Heart right ventricle (tissue), 16 donors: ENCODE measurements at regions of chr20 and their contacts with region 1.

Region 1: DNA sequence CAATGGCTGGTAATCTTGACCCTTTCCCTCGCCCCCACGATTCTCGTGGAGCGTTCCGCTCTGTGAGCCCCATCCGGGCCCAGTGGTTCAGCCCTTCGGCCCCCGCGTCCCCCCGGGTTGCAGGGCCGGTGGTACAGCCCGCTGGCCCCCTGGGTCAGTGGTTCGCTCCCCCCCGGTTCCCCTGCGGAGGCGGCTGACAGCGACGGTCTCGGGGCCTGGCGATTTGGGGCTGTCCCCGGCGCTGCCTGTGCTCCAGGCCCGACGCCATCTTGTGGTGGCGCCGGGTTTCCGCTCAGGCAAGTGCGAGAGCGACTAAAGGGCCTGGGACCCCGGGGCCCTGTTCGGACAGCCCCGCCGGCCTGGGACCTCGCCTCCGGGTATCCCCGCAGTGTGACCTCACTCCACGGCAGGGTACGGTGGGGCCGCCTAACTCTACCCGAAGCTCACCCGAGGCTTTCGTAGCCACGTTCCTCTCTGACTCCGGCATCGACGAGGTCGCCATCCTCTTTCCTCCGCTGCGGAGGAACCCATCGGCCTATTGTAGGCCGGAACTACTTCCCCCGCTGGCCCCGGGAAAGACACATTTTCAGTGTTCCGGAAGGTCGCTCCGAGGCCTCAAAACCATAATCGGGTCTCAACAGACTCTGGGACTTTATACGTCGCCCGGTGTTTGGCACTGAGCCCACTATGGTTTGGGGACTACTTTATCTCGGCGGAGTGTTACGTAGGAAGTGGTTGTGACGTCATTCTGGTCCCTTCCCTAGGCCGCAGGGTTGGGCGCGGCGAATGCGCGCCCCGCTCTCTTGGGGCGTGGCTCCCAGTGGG is at the start of gene ZNF335:
- DNase-seq: peak; percentile 96
- ATAC-seq: peak; percentile 93 to 98 (median 96)
- H3K4me3 ChIP-seq: peak within 1 kb of the TSS; percentile 63 to 99 (median 88)
- H3K27ac ChIP-seq: peak within 1 kb of the TSS; percentile 96 to 100 (median 99)
- H3K4me1 ChIP-seq: peaks cover 0 to 39% (median 22%) of the 10 kb centered on the region in 9 donors
- H3K27me3 ChIP-seq: no peaks in the 10 kb centered on the region
- CTCF ChIP-seq: peak in 8 of 9 donors; percentile 40 to 67 (median 50)
- total RNA-seq, gene ZNF335: 6.1 to 11.6 (median 7.3) TPM

Region 2: DNA sequence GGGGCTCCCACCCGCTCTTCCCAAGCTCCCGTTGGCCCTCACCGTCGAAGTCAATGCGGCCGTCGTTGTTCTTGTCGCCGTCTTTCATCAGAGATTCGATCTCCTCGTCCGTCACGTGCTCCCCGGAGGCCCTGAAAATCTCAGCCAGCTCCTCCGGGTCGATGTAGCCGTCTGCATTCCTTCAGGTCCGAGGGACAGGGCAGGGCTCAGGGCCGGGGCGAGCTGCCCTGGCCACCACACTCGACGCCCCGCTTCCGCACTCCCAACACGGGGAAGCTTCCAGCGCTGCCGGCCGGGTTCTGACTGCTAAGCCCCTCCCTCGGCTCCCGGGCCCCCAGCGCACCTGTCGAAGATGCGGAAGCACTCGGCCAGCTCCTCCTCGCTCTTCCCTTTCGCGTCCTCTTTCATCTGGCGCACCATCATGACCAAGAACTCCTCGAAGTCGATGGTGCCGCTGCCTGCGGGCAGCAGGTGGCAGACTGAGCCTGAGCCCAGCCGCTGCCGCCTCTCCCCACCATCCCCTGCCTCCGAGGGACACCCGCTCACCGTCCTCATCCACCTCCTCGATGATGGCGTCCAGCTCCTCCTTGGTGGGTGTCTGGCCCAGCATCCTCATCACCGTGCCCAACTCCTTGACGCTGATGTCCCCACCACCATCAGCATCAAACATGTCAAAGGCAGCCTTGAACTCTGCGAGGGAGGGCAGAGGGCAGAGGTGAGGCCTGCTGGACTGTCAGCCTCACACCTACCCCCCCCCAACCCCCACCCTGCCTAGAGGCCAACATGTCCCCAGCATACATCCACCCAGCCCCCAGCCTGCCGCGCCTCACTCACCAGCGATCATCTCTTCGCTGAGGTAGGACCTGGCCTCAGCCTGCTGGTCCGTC is 147.7 kb before region 1 on chr20:
- intact Hi-C with region 1: loop called in 4 of 10 experiments (anchors 10 kb)
- DNase-seq: peak in 1 of 2 donors; percentile 60
- ATAC-seq: peak; percentile 57 to 76 (median 67)
- H3K4me3 ChIP-seq: peak overlapping the region in 5 of 10 donors; percentile 3 to 30 (median 28)
- H3K27ac ChIP-seq: no peak overlapping the region
- H3K4me1 ChIP-seq: peaks cover 4 to 40% (median 26%) of the 10 kb centered on the region in 9 donors
- H3K27me3 ChIP-seq: peaks cover 3 to 53% (median 35%) of the 10 kb centered on the region in 7 donors
- CTCF ChIP-seq: peak; percentile 5 to 61 (median 49)

Region 3: DNA sequence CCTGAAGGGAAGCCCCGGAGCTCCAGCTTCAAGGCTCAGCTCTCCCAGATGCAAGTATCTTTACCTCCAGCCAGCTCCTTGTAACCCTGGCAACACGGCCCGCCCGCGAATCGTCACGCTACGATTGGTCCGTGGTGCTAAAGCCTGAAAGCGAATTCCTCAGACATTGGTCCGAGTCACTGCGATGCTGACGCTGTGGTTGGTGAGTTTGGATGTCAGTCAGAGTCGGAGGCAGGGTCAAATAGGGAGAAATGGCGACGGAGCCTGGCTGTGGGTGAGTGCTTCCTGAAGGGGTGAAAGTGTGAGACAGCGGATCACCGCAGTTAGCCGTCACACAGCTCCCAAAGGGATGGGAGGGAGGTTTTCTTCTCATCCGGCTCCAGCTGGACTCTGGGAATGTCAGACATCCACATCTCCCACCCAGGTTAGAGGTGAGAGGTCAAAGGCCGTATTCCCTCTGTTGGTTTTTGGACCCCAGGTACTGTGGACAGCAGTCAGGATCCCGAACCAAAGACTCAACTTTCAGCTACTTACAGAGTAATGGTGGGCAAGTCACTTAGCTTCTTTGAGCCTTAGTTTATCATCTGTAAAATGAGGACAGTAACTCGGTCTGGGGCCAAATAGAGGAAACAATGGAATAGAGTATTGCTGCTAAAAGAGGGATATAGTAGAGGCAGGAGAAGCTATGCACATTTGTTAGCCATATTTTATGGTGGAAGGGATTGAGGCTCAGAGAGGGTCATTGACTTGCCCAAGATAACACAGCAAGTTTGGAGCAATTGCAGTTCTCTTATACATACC is 90.7 kb before region 1 on chr20 and contains the start of gene ZSWIM1:
- intact Hi-C with region 1: loop called in 1 of 10 experiments (anchors 10 kb)
- DNase-seq: peak; percentile 99
- ATAC-seq: peak; percentile 95 to 99 (median 98)
- H3K4me3 ChIP-seq: peak within 1 kb of the TSS; percentile 57 to 79 (median 68)
- H3K27ac ChIP-seq: peak within 1 kb of the TSS; percentile 47 to 90 (median 83)
- H3K4me1 ChIP-seq: peaks cover 0 to 31% (median 21%) of the 10 kb centered on the region in 9 donors
- H3K27me3 ChIP-seq: no peaks in the 10 kb centered on the region
- CTCF ChIP-seq: no peak
- total RNA-seq, gene ZSWIM1: 9.2 to 12.0 (median 10.4) TPM

Region 4: DNA sequence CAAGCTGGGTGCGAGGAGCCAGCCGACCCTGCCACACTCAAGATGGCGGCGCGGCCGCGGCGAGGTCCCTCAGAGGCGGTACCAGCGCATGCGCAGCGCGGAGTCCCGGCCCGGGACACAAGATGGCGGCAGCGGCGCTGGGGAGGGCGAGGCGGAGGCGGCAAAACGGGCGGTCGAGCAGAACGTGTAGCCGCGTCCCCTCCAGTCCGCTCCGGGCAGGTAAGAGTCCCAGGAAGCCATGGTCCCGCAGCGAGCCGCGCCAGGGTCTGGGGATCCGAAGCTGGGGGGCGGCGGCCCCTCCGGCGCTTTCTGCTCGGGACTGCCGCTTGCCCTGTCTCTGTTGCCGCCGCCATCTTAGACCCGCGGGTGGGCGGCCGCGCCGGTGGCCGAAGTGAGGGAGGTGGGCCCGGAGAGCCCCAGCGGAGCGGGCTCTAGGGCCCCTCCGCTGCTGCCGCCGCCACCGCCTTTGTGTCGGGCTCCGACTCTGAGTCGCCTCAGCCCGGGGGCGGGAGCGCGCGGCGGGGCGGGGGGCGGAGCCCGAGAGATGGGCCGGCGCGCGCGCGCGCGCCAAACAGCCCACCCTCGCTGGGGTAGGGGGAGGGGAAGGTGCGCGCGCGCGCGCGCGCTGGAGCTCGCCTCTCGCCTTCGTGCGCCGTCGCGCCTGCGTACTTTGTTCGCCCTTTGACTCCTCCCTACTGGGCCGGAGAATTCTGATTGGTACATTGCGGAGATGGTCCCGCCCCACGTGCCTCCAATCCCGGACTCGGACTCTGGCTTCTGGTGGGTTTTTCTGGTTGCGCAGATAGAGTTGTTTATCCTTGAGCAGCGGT is 37.1 kb before region 1 on chr20 and contains the start of gene PCIF1:
- intact Hi-C with region 1: loop called in 3 of 10 experiments (anchors 1 to 2 kb)
- DNase-seq: peak; percentile 98 to 99
- ATAC-seq: peak; percentile 88 to 94 (median 92)
- H3K4me3 ChIP-seq: peak within 1 kb of the TSS; percentile 64 to 100 (median 96)
- H3K27ac ChIP-seq: peak within 1 kb of the TSS; percentile 99 to 100 (median 100)
- H3K4me1 ChIP-seq: peaks cover 0 to 38% (median 23%) of the 10 kb centered on the region in 9 donors
- H3K27me3 ChIP-seq: no peaks in the 10 kb centered on the region
- CTCF ChIP-seq: peak in 2 of 9 donors; percentile 6 to 13
- total RNA-seq, gene PCIF1: 23.6 to 33.1 (median 27.4) TPM

Region 5: GRCh38 chr20:46004889-46005473 is 33.1 kb after region 1 on chr20:
- intact Hi-C with region 1: no loop called
- DNase-seq: peak in 1 of 2 donors; percentile 48
- ATAC-seq: peak; percentile 42 to 79 (median 76)
- H3K4me3 ChIP-seq: peak overlapping the region in 1 of 10 donors; percentile 20
- H3K27ac ChIP-seq: peak overlapping the region in 1 of 10 donors; percentile 78
- H3K4me1 ChIP-seq: peaks cover 0 to 81% (median 7%) of the 10 kb centered on the region in 9 donors
- H3K27me3 ChIP-seq: peaks cover 0 to 97% (median 64%) of the 10 kb centered on the region in 7 donors
- CTCF ChIP-seq: no peak

Region 6: GRCh38 chr20:46057856-46058598 is 86.1 kb after region 1 on chr20:
- intact Hi-C with region 1: no loop called
- DNase-seq: peak; percentile 29 to 55
- ATAC-seq: peak; percentile 25 to 50 (median 40)
- H3K4me3 ChIP-seq: peak overlapping the region in 9 of 10 donors; percentile 0 to 49 (median 38)
- H3K27ac ChIP-seq: peak overlapping the region in 1 of 10 donors; percentile 32
- H3K4me1 ChIP-seq: peaks cover 12 to 56% (median 34%) of the 10 kb centered on the region in 9 donors
- H3K27me3 ChIP-seq: peaks cover 0 to 46% (median 19%) of the 10 kb centered on the region in 7 donors
- CTCF ChIP-seq: peak in 5 of 9 donors; percentile 18 to 47 (median 42)

Region 7: DNA sequence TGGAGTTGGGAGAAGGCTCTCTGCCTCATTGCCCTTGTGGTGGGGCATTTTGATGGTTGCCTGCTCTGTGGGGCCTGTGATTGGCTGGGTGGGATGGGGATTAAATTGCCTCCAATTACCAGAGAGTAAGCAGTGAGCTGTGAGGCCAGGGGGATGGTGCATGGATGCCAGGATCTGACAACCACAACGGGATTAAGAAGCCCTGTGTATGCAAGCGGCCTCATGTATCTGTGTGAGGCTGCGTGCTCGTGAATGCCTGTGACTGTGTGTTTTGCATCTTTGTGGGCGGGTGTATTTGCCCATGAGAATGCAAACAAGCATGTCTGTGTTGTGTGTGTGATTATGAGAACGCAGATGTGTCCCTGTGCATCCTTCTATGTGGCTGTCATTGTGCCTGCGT is 192.4 kb after region 1 on chr20:
- intact Hi-C with region 1: no loop called
- DNase-seq: no peak
- ATAC-seq: no peak
- H3K4me3 ChIP-seq: no peak overlapping the region
- H3K27ac ChIP-seq: no peak overlapping the region
- H3K4me1 ChIP-seq: no peaks in the 10 kb centered on the region
- H3K27me3 ChIP-seq: peaks cover 0 to 67% (median 43%) of the 10 kb centered on the region in 7 donors
- CTCF ChIP-seq: no peak

Region 8: GRCh38 chr20:46283426-46284039 is 311.6 kb after region 1 on chr20:
- intact Hi-C with region 1: no loop called
- DNase-seq: no peak
- ATAC-seq: no peak
- H3K4me3 ChIP-seq: no peak overlapping the region
- H3K27ac ChIP-seq: no peak overlapping the region
- H3K4me1 ChIP-seq: no peaks in the 10 kb centered on the region
- H3K27me3 ChIP-seq: peaks cover 0 to 99% (median 89%) of the 10 kb centered on the region in 7 donors
- CTCF ChIP-seq: no peak